Aorta (tissue), 5 donors: ENCODE measurements at regions of chr2 and their contacts with region 1.

Region 1: DNA sequence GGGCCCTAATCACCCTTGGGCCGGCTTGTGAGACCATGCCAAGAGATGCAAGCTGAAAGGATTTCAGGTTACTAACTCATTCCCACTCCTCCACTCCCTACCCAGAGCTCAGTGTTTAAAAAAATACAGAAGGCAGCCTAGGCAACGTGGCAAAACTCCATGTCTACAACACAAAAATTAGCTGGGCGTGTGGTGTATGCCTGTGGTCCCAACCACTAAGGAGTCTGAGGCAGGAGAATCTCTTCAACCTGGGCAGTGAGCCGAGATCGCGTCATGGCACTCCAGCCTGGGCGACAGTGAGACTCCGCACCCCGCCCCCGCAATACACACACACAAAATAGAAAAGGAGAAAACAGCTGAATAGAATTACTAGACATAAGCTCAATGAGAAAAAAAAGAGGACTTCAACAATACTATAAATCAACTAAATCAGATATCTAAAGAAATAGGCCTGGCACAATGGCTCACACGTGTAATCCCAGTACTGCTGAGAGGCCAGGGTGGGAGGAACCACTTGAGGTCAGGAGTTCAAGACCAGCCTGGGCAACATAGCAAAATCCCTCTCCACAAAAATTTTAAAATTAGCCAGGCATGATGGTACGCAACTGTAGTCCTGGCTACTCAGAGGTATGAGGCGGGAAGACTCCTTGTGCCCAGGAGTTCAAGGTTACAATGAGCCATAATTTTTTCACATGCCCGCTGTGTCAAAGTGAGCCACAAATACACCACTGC is 10.1 kb downstream of the IWS1 start:
- DNase-seq: peak; percentile 94 to 96
- ATAC-seq: peak; percentile 86
- H3K4me3 ChIP-seq: no peak overlapping the region
- H3K27ac ChIP-seq: peak overlapping the region; percentile 20 to 84
- H3K4me1 ChIP-seq: no peaks in the 10 kb centered on the region
- H3K27me3 ChIP-seq: no peaks in the 10 kb centered on the region

Region 2: GRCh38 chr2:127532286-127532685 is 16.1 kb after region 1 on chr2:
- intact Hi-C with region 1: loop called in 1 of 2 experiments (anchors 1 kb)
- DNase-seq: no peak
- ATAC-seq: no peak
- H3K4me3 ChIP-seq: no peak overlapping the region
- H3K27ac ChIP-seq: no peak overlapping the region
- H3K4me1 ChIP-seq: no peaks in the 10 kb centered on the region
- H3K27me3 ChIP-seq: no peaks in the 10 kb centered on the region

Region 3: DNA sequence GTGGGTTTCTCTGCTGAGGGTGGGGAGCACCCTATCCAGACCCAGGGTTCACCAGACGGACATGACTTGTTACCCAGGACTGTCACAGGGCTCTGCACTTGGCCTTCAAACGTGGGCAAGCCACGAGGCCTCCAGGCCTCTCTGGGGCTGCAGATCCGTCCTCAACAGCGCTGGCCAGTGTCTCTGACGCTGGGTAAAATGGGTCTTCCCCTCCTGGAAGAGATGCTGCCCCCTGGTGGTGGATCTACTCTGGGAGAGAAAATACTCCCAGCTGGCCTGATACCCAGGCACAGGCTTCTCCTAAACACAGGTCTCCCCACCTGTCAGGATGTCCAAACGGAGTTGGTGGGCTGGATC is 133.5 kb after region 1 on chr2:
- intact Hi-C with region 1: loop called in 1 of 2 experiments (anchors 5 kb)
- DNase-seq: peak; percentile 89
- ATAC-seq: peak; percentile 69
- H3K4me3 ChIP-seq: no peak overlapping the region
- H3K27ac ChIP-seq: peak overlapping the region in 1 of 2 donors; percentile 33
- H3K4me1 ChIP-seq: no peaks in the 10 kb centered on the region
- H3K27me3 ChIP-seq: no peaks in the 10 kb centered on the region